ENCODE measurements at regions of chr2 and their contacts with region 1.

Region 1: DNA sequence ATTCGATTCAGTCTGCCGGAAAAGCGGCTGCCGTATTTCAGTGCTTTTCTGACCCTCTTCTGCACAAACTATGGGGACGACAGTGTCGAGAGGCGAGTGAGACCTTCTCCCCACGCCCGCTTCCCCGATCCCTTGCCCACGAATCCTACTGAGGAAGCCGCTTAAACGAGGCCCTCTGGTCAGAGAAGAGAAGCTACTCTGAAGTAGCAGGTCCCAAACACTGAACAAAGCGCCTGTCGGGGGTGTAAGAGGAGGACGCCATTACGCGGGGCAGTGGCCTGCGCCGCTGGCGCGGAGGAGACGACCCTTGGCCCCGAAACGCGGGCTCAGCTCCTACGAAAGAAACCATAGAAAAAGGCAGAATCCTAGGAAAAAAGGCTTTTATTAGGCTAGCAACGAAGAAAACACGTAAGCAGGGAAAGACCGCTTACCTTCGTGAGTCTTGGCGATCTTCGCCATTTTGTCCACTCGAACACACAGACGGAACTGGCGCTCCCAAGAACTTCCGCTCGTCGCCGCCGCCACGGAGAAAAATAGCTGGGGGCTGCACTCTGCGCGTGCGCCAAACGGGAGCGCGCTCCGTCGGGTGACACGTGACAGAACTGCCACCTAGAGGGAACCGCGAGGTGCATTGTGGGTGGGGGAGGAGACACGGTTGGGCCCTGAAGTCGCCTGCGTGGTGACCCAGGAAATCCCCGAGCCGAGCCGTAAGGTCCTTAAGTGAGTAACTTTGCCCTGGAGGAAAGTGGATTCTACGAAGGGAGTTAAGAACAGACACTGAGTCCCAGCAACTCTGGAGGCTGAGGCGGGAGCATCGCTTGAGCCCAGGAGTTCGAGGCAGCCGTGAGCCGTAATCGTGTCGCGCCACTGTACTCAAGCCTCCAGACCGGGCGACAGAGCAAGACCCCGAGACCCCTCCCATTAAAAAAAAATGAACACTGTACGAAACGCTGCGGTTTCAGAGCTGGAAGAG is at the start of gene SF3B1:
- DNase-seq: peak; percentile 97 to 99 (median 98)
- H3K4me3 ChIP-seq: peak within 1 kb of the TSS; percentile 78
- H3K27ac ChIP-seq: peak within 1 kb of the TSS; percentile 84 to 92
- H3K4me1 ChIP-seq: peaks cover 15% of the 10 kb centered on the region
- H3K27me3 ChIP-seq: no peaks in the 10 kb centered on the region
- CTCF ChIP-seq: peak in 1 of 3 donors; percentile 8
- EP300 ChIP-seq: no peak
- POLR2A ChIP-seq: peak; percentile 97
- total RNA-seq, gene SF3B1: 190 to 336 (median 245) TPM

Region 2: GRCh38 chr2:197453161-197453914 is 18.5 kb after region 1 on chr2 and contains the start of gene COQ10B:
- intact Hi-C with region 1: loop called in 1 of 4 experiments (anchors 2 kb)
- DNase-seq: peak; percentile 99
- H3K4me3 ChIP-seq: peak within 1 kb of the TSS; percentile 91
- H3K27ac ChIP-seq: peak within 1 kb of the TSS; percentile 96 to 99
- H3K4me1 ChIP-seq: peaks cover 3% of the 10 kb centered on the region
- H3K27me3 ChIP-seq: no peaks in the 10 kb centered on the region
- CTCF ChIP-seq: peak; percentile 15 to 46 (median 42)
- EP300 ChIP-seq: peak; percentile 82
- POLR2A ChIP-seq: peak; percentile 95
- total RNA-seq, gene COQ10B: 16.4 to 23.1 (median 18.4) TPM

Region 3: DNA sequence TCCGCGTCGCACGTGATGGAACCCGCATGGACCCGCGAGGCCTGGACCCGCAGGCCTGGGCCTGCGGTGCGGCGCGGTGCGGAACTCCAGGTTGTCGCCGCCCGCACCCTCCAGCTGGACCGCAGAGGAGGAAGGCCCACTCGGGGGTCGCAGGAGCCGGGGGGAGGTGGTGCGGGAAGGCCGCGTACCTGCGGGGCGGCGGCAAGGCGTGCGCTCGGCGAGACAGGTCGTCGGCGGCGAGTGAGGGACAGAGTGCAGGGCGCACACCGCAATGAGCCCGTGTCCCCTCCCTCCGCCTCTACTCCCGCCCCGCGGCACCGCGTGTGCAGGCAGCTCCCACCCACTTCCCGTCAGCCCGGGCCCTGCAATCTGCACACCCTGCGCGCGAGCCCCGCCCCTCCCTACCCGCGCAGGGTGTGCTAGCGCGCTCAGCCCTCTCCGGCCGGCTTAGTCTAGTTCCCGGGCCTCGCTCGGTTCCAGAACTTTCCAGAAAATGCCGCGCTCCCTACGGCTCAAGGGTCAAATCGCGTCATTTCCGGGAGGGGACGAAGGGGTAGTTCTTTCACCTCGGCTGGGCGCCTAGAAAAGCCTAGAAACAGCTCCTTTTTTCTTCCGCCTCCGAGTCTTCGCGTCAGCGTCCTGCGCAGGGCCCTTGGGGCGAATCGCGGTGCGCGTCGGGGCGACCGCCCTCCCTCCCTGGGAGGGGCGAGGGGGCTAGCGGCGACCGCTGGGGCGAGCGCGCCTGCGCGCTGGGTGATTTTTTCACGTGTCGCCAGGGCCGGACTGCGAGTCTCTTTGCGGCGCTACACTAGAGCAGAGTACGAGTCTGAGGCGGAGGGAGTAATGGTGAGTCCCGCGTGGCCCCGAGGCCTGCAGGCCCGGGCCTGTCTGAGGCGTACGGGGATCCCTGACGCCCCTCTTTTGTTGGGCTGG is 65.0 kb after region 1 on chr2 and contains the starts of genes HSPD1 and HSPE1:
- intact Hi-C with region 1: loop called in 1 of 4 experiments (anchors 10 kb)
- DNase-seq: peak; percentile 98
- H3K4me3 ChIP-seq: peak within 1 kb of the TSS; percentile 95
- H3K27ac ChIP-seq: peak within 1 kb of the TSS; percentile 96 to 97
- H3K4me1 ChIP-seq: peaks cover 4% of the 10 kb centered on the region
- H3K27me3 ChIP-seq: no peaks in the 10 kb centered on the region
- CTCF ChIP-seq: peak in 2 of 3 donors; percentile 10 to 37
- EP300 ChIP-seq: peak; percentile 84
- POLR2A ChIP-seq: peak; percentile 92
- total RNA-seq, gene HSPD1: 146 to 289 (median 192) TPM
- total RNA-seq, gene HSPE1: 57.8 to 110 (median 69.5) TPM

Region 4: DNA sequence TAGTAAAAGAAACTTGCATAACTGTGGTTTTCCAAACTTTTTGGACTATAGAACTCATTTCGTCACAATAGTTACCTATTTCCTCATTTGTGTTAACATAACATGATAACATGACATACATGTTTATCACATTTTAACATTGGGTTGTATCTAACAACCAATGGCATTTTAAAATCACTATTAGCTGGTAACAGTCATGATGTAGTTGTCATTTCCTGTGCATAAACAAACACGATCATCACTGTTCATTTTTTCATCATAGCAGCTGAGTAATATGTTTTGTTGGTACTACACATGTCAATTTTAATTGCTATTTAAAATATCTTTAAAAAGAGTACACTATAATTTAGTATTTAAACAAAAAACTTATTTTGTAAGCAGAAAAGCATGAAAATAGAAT is 1620.5 kb after region 1 on chr2:
- intact Hi-C with region 1: loop called in 1 of 4 experiments (anchors 5 kb)
- DNase-seq: no peak
- H3K4me3 ChIP-seq: no peak overlapping the region
- H3K27ac ChIP-seq: no peak overlapping the region
- H3K4me1 ChIP-seq: no peaks in the 10 kb centered on the region
- H3K27me3 ChIP-seq: no peaks in the 10 kb centered on the region
- CTCF ChIP-seq: no peak
- EP300 ChIP-seq: no peak
- POLR2A ChIP-seq: no peak

Measured in ovary (tissue), 10 donors.